ENCODE measurements at regions of chr6 and their contacts with region 1.

Region 1: DNA sequence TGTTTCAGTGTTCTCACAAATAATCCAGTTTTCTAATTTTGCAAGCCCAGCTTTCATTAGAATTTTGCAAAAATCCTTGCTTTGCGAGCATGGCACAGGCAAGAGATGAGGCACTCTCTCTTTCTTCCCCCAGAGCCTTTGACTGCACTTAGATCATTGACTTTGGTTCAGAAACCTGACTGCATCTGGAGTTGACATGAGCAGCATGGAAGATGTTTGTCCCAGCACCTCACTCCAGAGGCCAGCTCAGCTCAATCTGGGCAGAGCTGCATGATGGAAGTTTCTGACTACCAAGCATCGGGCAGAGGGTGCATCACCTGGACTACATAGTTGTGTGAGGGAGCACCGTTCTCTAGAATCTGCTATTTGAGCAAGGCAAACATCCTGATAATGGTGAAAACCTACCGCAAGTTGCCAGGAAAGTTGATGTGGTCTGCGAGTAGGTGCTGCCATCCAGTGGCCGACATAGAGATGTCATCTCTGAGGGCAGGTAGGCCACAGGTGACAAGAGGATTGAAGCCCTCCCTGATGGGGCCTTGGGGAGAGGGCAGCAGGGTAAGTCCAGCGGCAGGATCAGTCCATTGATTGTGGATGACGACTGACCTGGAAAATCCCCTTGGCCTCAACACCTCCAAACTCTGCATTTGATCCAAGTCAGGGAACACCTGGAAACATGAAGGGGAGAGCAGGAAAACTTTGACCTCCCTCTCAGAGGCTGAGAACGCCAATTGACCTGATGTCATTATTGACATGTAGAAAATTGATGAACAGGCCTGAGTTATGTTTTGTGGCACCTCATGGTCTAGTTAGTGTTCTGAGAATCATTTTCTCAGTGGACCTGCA is 3.8 kb upstream of the LPA start:
- DNase-seq: peak; percentile 1
- ATAC-seq: peak; percentile 76
- H3K4me3 ChIP-seq: no peak overlapping the region
- H3K27ac ChIP-seq: no peak overlapping the region
- H3K4me1 ChIP-seq: no peaks in the 10 kb centered on the region
- H3K27me3 ChIP-seq: no peaks in the 10 kb centered on the region
- CTCF ChIP-seq: peak; percentile 61 to 78 (median 63)
- EP300 ChIP-seq: no peak
- POLR2A ChIP-seq: no peak
- RAD21 ChIP-seq: peak; percentile 73

Region 2: GRCh38 chr6:160137989-160138835 is 529.6 kb before region 1 on chr6:
- CTCF ChIA-PET with region 1: no interaction called
- POLR2A ChIA-PET with region 1: no interaction called
- RAD21 ChIA-PET with region 1: no interaction called
- SMC1A ChIA-PET with region 1: no interaction called
- in situ Hi-C with region 1: no loop called
- intact Hi-C with region 1: loop called (anchors 10 kb)
- DNase-seq: peak; percentile 23
- ATAC-seq: peak; percentile 72
- H3K4me3 ChIP-seq: no peak overlapping the region
- H3K27ac ChIP-seq: no peak overlapping the region
- H3K4me1 ChIP-seq: no peaks in the 10 kb centered on the region
- H3K27me3 ChIP-seq: no peaks in the 10 kb centered on the region; a peak in 1 of 4 replicates
- CTCF ChIP-seq: peak; percentile 67 to 85 (median 77)
- EP300 ChIP-seq: no peak
- POLR2A ChIP-seq: no peak
- RAD21 ChIP-seq: peak; percentile 73

Region 3: GRCh38 chr6:160520043-160520904 is 147.6 kb before region 1 on chr6:
- CTCF ChIA-PET with region 1: interaction called, 8 read pairs
- POLR2A ChIA-PET with region 1: no interaction called
- RAD21 ChIA-PET with region 1: no interaction called
- SMC1A ChIA-PET with region 1: interaction called, 4 read pairs
- in situ Hi-C with region 1: no loop called
- intact Hi-C with region 1: loop called (anchors 2 kb)
- DNase-seq: no peak
- ATAC-seq: peak; percentile 89
- H3K4me3 ChIP-seq: peak overlapping the region; percentile 69; the same call in 1 of the 2 replicates
- H3K27ac ChIP-seq: no peak overlapping the region
- H3K4me1 ChIP-seq: no peaks in the 10 kb centered on the region
- H3K27me3 ChIP-seq: no peaks in the 10 kb centered on the region
- CTCF ChIP-seq: peak in 1 of 3 experiments; percentile 92; a peak in 4 of 6 replicates
- EP300 ChIP-seq: no peak
- POLR2A ChIP-seq: no peak
- RAD21 ChIP-seq: peak; percentile 74

Region 4: DNA sequence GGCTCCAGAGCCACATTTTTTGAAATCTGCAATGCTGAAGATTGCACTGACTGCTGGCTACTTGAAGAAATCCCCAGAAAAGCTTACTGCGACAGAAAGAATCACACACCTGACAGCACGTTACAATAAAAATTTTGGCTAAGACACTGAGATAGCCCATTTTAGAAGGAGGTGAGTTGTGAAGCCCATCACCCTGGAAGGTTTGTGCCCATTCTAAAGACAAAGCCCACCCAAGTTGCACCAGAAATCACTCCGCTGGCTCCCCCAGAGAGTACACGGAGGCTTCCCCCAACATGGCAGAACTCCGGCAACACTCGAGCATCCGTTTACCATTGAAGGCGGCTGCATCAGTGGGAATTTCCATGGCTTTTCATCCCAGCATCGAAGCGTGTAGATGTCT is 33.2 kb before region 1 on chr6:
- CTCF ChIA-PET with region 1: no interaction called
- POLR2A ChIA-PET with region 1: no interaction called
- RAD21 ChIA-PET with region 1: no interaction called
- SMC1A ChIA-PET with region 1: no interaction called
- in situ Hi-C with region 1: no loop called
- intact Hi-C with region 1: no loop called
- DNase-seq: peak; percentile 0
- ATAC-seq: no peak
- H3K4me3 ChIP-seq: no peak overlapping the region
- H3K27ac ChIP-seq: no peak overlapping the region
- H3K4me1 ChIP-seq: no peaks in the 10 kb centered on the region
- H3K27me3 ChIP-seq: no peaks in the 10 kb centered on the region
- CTCF ChIP-seq: no peak
- EP300 ChIP-seq: no peak
- POLR2A ChIP-seq: no peak
- RAD21 ChIP-seq: no peak

Region 5: DNA sequence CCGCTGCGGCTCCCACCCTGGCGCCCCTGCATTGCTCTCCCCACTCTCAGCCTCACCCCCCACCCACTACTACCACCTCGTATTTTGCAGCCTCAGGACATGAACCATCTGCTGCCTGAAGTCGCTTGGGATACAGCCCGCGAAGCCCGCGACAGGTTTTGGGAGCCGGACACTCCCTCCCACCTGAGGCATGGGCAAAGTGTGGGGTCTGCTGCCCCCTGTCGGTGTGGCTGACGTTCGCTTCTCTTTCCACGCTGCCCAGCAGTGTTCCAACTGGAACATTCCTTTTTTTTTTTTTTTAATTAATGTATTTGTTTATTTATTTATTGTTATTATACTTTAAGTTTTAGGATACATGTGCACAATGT is 11.5 kb after region 1 on chr6:
- CTCF ChIA-PET with region 1: no interaction called
- POLR2A ChIA-PET with region 1: no interaction called
- RAD21 ChIA-PET with region 1: no interaction called
- SMC1A ChIA-PET with region 1: no interaction called
- in situ Hi-C with region 1: no loop called
- intact Hi-C with region 1: no loop called
- DNase-seq: no peak
- ATAC-seq: no peak
- H3K4me3 ChIP-seq: no peak overlapping the region
- H3K27ac ChIP-seq: no peak overlapping the region
- H3K4me1 ChIP-seq: no peaks in the 10 kb centered on the region
- H3K27me3 ChIP-seq: no peaks in the 10 kb centered on the region
- CTCF ChIP-seq: 0 out of 6 replicates have a peak, but pooled peaks of 1 of the 3 experiments have one; percentile 6
- EP300 ChIP-seq: no peak
- POLR2A ChIP-seq: no peak
- RAD21 ChIP-seq: no peak